GM12878 (cell line): ENCODE measurements at regions of chr22 and their contacts with region 1.

Region 1: DNA sequence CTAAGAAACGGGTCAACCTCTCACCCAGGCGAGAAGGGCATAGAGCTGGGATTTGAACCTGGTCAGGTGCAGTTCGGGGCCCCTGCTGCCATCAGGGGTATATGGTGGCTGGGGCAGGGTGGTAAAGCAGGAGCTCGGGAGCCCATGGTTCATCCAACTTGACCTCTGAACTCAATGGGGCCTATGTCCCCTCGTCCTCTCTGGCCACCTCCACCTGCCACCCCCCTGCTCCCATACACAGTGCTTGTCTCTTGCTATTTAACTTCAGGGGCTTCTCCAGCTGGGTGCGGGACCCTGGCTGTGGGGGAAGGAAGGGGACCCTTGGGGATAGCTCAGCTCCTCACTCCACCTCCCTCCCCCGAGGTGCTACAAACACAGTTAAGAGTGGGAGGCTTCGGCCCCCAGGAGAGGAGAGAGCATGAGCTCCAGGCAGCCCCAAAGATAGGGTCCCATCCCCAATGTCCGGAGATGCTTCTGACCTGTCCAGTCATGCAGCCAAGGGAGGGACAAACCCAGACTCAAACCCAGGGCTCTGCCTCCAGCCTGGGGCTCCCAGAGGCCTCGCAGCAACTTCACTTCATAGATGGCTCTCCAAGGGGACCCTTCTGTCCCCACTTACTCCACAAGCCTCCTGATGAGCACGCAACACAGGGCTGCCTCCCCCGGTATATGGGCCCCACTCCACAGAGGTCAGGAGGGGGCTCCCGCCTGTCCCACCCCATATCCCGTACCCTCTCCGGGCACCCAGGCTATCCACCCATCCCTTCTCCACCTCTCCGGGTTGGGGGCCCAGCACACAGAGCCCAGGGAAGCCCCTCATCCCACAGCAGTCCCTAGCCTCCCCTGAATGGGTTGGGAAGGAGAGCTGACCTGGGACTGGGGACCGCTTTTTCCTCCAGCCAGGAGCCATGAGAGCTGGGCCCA is 712 bp downstream of the IL2RB start:
- DNase-seq: no peak
- ATAC-seq: peak; percentile 24
- H3K4me3 ChIP-seq: peak overlapping the region; percentile 99
- H3K27ac ChIP-seq: peak overlapping the region; percentile 94
- H3K4me1 ChIP-seq: peaks cover 31% of the 10 kb centered on the region
- H3K27me3 ChIP-seq: no peaks in the 10 kb centered on the region
- CTCF ChIP-seq: no peak
- EP300 ChIP-seq: no peak
- POLR2A ChIP-seq: no peak
- RAD21 ChIP-seq: no peak

Region 2: DNA sequence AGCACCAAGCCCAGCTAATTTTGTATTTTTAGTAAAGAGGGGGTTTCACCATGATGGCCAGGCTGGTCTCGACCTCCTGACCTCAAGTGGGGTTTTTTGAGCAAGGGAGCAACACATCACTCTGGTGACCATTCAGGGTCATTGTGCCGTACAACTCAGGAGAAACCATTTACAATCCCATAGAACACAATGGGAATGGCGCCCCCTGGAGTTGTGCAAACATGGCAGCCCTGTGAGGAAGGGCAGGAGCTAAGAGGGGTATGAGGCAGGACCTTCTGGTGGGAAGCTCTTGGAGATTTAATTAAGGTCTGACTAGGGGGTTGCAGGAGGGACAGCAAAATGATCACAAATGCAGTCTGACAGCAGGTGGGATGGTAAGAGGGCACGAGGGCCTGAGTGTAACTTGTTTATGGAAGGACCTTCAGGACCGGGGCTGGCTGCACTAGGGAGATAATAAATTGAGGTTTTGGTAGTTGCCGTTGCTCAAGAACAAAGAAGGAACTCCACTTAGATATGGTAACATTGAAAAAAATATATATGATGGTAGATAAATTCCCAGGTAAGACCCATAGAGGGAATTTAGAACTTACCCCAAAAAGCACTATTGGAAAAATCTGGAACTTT is 244.6 kb before region 1 on chr22:
- CTCF ChIA-PET with region 1: no interaction called
- POLR2A ChIA-PET with region 1: no interaction called
- RAD21 ChIA-PET with region 1: no interaction called
- SMC1A ChIA-PET with region 1: no interaction called
- in situ Hi-C with region 1: no loop called
- intact Hi-C with region 1: no loop called
- DNase-seq: no peak
- ATAC-seq: no peak
- H3K4me3 ChIP-seq: no peak overlapping the region
- H3K27ac ChIP-seq: no peak overlapping the region
- H3K4me1 ChIP-seq: peaks cover 33% of the 10 kb centered on the region
- H3K27me3 ChIP-seq: no peaks in the 10 kb centered on the region
- CTCF ChIP-seq: no peak
- EP300 ChIP-seq: no peak
- POLR2A ChIP-seq: no peak
- RAD21 ChIP-seq: no peak

Region 3: GRCh38 chr22:37043828-37044538 is 105.0 kb before region 1 on chr22:
- CTCF ChIA-PET with region 1: interaction called, 11 read pairs
- POLR2A ChIA-PET with region 1: no interaction called
- RAD21 ChIA-PET with region 1: interaction called, 7 read pairs
- SMC1A ChIA-PET with region 1: no interaction called
- in situ Hi-C with region 1: no loop called
- intact Hi-C with region 1: no loop called
- DNase-seq: no peak
- ATAC-seq: peak; percentile 99
- H3K4me3 ChIP-seq: no peak overlapping the region
- H3K27ac ChIP-seq: no peak overlapping the region
- H3K4me1 ChIP-seq: peaks cover 10% of the 10 kb centered on the region
- H3K27me3 ChIP-seq: peaks cover 0 to 2% of the 10 kb centered on the region in 2 experiments; a peak in 1 of 4 replicates
- CTCF ChIP-seq: peak; percentile 81 to 92 (median 85)
- EP300 ChIP-seq: no peak
- POLR2A ChIP-seq: no peak
- RAD21 ChIP-seq: peak; percentile 58

Region 4: GRCh38 chr22:37098976-37099591 is 49.9 kb before region 1 on chr22:
- CTCF ChIA-PET with region 1: interaction called, 12 read pairs
- POLR2A ChIA-PET with region 1: interaction called, 5 read pairs
- RAD21 ChIA-PET with region 1: interaction called, 17 read pairs
- SMC1A ChIA-PET with region 1: interaction called, 9 read pairs
- in situ Hi-C with region 1: no loop called
- intact Hi-C with region 1: no loop called
- DNase-seq: no peak
- ATAC-seq: peak; percentile 54
- H3K4me3 ChIP-seq: no peak overlapping the region
- H3K27ac ChIP-seq: no peak overlapping the region
- H3K4me1 ChIP-seq: peaks cover 6% of the 10 kb centered on the region; the same call in 1 of the 2 replicates
- H3K27me3 ChIP-seq: peaks cover 1 to 5% of the 10 kb centered on the region in 2 experiments; a peak in 3 of 4 replicates
- CTCF ChIP-seq: peak; percentile 35 to 38 (median 38); a peak in 5 of 6 replicates
- EP300 ChIP-seq: no peak
- POLR2A ChIP-seq: no peak
- RAD21 ChIP-seq: peak; percentile 39; the same call in 1 of the 2 replicates

Region 5: GRCh38 chr22:37166675-37167066 is 17.7 kb after region 1 on chr22:
- CTCF ChIA-PET with region 1: interaction called, 116 read pairs
- POLR2A ChIA-PET with region 1: interaction called, 128 read pairs
- RAD21 ChIA-PET with region 1: interaction called, 158 read pairs
- SMC1A ChIA-PET with region 1: interaction called, 203 read pairs
- in situ Hi-C with region 1: no loop called
- intact Hi-C with region 1: loop called (anchors 1 kb)
- DNase-seq: no peak
- ATAC-seq: peak; percentile 21
- H3K4me3 ChIP-seq: no peak overlapping the region; the same call in 1 of the 2 replicates
- H3K27ac ChIP-seq: no peak overlapping the region; the same call in 1 of the 2 replicates
- H3K4me1 ChIP-seq: peaks cover 62% of the 10 kb centered on the region
- H3K27me3 ChIP-seq: no peaks in the 10 kb centered on the region
- CTCF ChIP-seq: peak in 2 of 3 experiments; percentile 87 to 92; a peak in 5 of 6 replicates
- EP300 ChIP-seq: no peak
- POLR2A ChIP-seq: no peak
- RAD21 ChIP-seq: peak; percentile 77

Region 6: GRCh38 chr22:37244114-37244921 is 95.3 kb after region 1 on chr22 and contains the start of gene RAC2:
- CTCF ChIA-PET with region 1: interaction called, 3 read pairs
- POLR2A ChIA-PET with region 1: interaction called, 7 read pairs
- RAD21 ChIA-PET with region 1: interaction called, 16 read pairs
- SMC1A ChIA-PET with region 1: interaction called, 12 read pairs
- in situ Hi-C with region 1: no loop called
- intact Hi-C with region 1: no loop called
- DNase-seq: no peak
- ATAC-seq: peak; percentile 69
- H3K4me3 ChIP-seq: peak within 1 kb of the TSS; percentile 91
- H3K27ac ChIP-seq: peak within 1 kb of the TSS; percentile 96
- H3K4me1 ChIP-seq: peaks cover 49% of the 10 kb centered on the region
- H3K27me3 ChIP-seq: no peaks in the 10 kb centered on the region
- CTCF ChIP-seq: no peak
- EP300 ChIP-seq: 0 out of 4 replicates have a peak, but pooled peaks of 1 of the 2 experiments have one; percentile 37
- POLR2A ChIP-seq: peak; percentile 98
- RAD21 ChIP-seq: no peak
- polyA plus RNA-seq, gene RAC2: 102 to 108 TPM

Region 7: DNA sequence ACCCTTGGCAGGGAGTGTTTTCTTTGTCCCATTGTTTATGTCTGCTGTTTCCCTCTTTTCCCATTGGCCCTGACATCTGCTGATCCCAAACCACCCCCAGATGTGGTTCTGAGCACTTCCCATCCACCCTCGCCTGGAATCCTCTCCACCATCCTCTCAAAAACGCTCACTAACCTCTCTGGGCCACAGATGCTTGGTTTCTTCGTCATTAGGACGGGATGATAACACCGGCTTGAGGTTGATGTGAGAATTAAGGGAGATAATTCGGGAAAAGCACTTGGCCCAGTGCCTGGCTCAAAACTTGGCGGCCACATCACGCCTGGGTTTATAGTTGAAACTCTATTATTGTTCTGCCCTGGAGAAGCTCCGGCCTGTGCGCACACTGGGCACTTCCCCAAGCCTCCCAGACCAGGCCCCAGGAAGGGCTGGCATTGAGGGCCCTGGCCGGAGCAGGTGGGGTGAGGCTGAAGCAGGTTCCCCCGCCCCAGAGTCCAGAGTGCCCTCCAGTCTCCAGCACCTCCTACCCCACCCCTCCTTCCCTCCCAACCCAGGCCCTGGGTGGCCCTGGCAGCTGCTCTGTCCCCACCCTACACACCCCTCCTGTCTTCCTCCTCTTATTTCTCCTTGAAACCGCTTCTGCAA is 197.0 kb after region 1 on chr22:
- CTCF ChIA-PET with region 1: no interaction called
- POLR2A ChIA-PET with region 1: no interaction called
- RAD21 ChIA-PET with region 1: no interaction called
- SMC1A ChIA-PET with region 1: no interaction called
- in situ Hi-C with region 1: no loop called
- intact Hi-C with region 1: no loop called
- DNase-seq: no peak
- ATAC-seq: no peak
- H3K4me3 ChIP-seq: no peak overlapping the region
- H3K27ac ChIP-seq: no peak overlapping the region
- H3K4me1 ChIP-seq: peaks cover 8% of the 10 kb centered on the region
- H3K27me3 ChIP-seq: peaks cover 0 to 5% of the 10 kb centered on the region in 2 experiments; a peak in 2 of 4 replicates
- CTCF ChIP-seq: no peak
- EP300 ChIP-seq: no peak
- POLR2A ChIP-seq: no peak
- RAD21 ChIP-seq: no peak